Activated CD4-positive, alpha-beta T cell treated with anti-CD3 and anti-CD28 coated beads for 36 hours (primary cell): ENCODE measurements at regions of chr7 and their contacts with region 1.

Region 1: DNA sequence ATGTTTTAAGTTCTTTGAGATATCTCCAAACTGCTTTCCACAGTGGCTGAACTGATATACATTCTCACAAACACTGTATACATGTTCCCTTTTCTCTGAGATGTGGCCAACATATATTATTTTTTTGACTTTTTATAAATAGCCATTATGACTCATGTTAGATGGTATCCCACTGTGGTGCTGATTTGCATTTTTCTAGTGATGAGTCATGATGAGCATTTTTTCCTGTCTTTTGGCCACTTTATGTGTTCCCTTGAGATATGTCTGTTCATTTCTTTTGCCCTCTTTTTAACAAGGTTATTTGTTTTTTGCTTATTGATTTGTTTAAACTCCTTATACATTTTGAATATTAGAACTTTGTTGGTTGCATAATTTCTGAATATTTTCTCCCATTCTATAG is 1055.1 kb downstream of the NXPH1 start:
- DNase-seq: no peak
- ATAC-seq: no peak
- H3K4me3 Mint-ChIP-seq: no peak overlapping the region
- H3K27ac Mint-ChIP-seq: no peak overlapping the region
- H3K4me1 Mint-ChIP-seq: no peaks in the 10 kb centered on the region
- H3K27me3 Mint-ChIP-seq: no peaks in the 10 kb centered on the region

Region 2: DNA sequence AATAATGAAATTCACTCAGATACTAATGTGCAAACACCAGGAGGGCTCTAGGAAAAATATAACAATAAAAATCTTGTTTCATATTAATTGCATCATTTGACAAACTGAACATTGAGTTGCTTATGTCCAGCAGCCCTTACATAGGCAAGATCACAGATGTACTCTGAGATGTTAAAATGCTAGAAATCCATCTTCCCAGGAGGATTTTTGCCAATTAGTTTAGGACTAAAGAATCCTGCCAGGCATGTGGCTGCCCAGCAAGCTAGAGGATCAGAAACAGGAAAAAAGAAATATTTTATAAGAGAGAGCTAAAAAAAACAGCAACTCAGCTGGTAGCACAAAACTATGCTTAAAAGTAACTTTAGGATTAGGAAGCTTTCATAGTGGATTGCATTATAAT is 647.4 kb before region 1 on chr7:
- CTCF ChIA-PET with region 1: no interaction called
- POLR2A ChIA-PET with region 1: interaction called, 11 read pairs
- intact Hi-C with region 1: no loop called
- DNase-seq: no peak
- ATAC-seq: no peak
- H3K4me3 Mint-ChIP-seq: no peak overlapping the region
- H3K27ac Mint-ChIP-seq: no peak overlapping the region
- H3K4me1 Mint-ChIP-seq: no peaks in the 10 kb centered on the region
- H3K27me3 Mint-ChIP-seq: no peaks in the 10 kb centered on the region